ENCODE measurements at regions of chr13 and their contacts with region 1.

Region 1: GRCh38 chr13:35818633-35819067 is 312.5 kb downstream of the DCLK1 start:
- DNase-seq: peak; percentile 43
- H3K4me3 ChIP-seq: no peak overlapping the region
- H3K27ac ChIP-seq: no peak overlapping the region
- H3K4me1 ChIP-seq: no peaks in the 10 kb centered on the region
- H3K27me3 ChIP-seq: no peaks in the 10 kb centered on the region
- CTCF ChIP-seq: peak; percentile 38 to 50
- POLR2A ChIP-seq: no peak

Region 2: GRCh38 chr13:35164324-35164932 is 654.2 kb before region 1 on chr13:
- CTCF ChIA-PET with region 1: interaction called, 11 read pairs
- POLR2A ChIA-PET with region 1: no interaction called
- dilution Hi-C with region 1: no loop called
- intact Hi-C with region 1: no loop called
- DNase-seq: peak; percentile 59
- H3K4me3 ChIP-seq: no peak overlapping the region
- H3K27ac ChIP-seq: no peak overlapping the region
- H3K4me1 ChIP-seq: no peaks in the 10 kb centered on the region
- H3K27me3 ChIP-seq: no peaks in the 10 kb centered on the region
- CTCF ChIP-seq: peak; percentile 25 to 26
- POLR2A ChIP-seq: no peak

Region 3: DNA sequence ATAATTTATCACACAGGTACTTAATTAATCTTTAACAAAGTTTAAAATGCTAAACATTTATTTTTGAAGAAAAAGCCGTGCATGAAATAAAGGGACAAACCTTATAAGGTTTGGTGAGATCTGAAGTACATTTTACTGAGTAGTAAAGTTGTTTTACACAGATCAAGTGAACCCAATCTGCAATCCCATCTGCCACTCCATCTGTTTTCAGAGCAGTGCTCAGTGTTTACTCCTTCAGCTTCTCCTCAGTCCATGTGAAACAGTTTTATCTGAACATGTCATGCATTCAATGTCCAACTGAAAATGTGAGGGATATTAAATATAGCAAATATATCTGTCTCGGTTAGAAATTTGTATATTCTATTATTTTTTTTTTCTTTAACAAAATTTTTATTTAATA is 508.9 kb before region 1 on chr13:
- CTCF ChIA-PET with region 1: no interaction called
- POLR2A ChIA-PET with region 1: no interaction called
- dilution Hi-C with region 1: no loop called
- intact Hi-C with region 1: no loop called
- DNase-seq: no peak
- H3K4me3 ChIP-seq: no peak overlapping the region
- H3K27ac ChIP-seq: no peak overlapping the region
- H3K4me1 ChIP-seq: no peaks in the 10 kb centered on the region
- H3K27me3 ChIP-seq: no peaks in the 10 kb centered on the region
- CTCF ChIP-seq: no peak
- POLR2A ChIP-seq: no peak

Region 4: GRCh38 chr13:35789335-35790165 is 29.1 kb before region 1 on chr13:
- CTCF ChIA-PET with region 1: interaction called, 47 read pairs
- POLR2A ChIA-PET with region 1: no interaction called
- dilution Hi-C with region 1: no loop called
- intact Hi-C with region 1: no loop called
- DNase-seq: peak; percentile 48
- H3K4me3 ChIP-seq: no peak overlapping the region
- H3K27ac ChIP-seq: no peak overlapping the region
- H3K4me1 ChIP-seq: no peaks in the 10 kb centered on the region
- H3K27me3 ChIP-seq: no peaks in the 10 kb centered on the region
- CTCF ChIP-seq: peak; percentile 34 to 45
- POLR2A ChIP-seq: no peak

Region 5: GRCh38 chr13:35804901-35805300 is 13.7 kb before region 1 on chr13:
- CTCF ChIA-PET with region 1: interaction called, 29 read pairs
- POLR2A ChIA-PET with region 1: no interaction called
- dilution Hi-C with region 1: no loop called
- intact Hi-C with region 1: no loop called
- DNase-seq: no peak
- H3K4me3 ChIP-seq: no peak overlapping the region
- H3K27ac ChIP-seq: no peak overlapping the region
- H3K4me1 ChIP-seq: no peaks in the 10 kb centered on the region
- H3K27me3 ChIP-seq: peaks cover 2 to 5% of the 10 kb centered on the region in 2 experiments
- CTCF ChIP-seq: no peak
- POLR2A ChIP-seq: no peak

Region 6: GRCh38 chr13:35838356-35838755 is 19.7 kb after region 1 on chr13:
- CTCF ChIA-PET with region 1: interaction called, 22 read pairs
- POLR2A ChIA-PET with region 1: no interaction called
- dilution Hi-C with region 1: no loop called
- intact Hi-C with region 1: no loop called
- DNase-seq: peak; percentile 89
- H3K4me3 ChIP-seq: peak overlapping the region in 1 of 3 experiments; percentile 23
- H3K27ac ChIP-seq: peak overlapping the region; percentile 98
- H3K4me1 ChIP-seq: peaks cover 27% of the 10 kb centered on the region
- H3K27me3 ChIP-seq: no peaks in the 10 kb centered on the region
- CTCF ChIP-seq: no peak
- POLR2A ChIP-seq: peak; percentile 27

Region 7: DNA sequence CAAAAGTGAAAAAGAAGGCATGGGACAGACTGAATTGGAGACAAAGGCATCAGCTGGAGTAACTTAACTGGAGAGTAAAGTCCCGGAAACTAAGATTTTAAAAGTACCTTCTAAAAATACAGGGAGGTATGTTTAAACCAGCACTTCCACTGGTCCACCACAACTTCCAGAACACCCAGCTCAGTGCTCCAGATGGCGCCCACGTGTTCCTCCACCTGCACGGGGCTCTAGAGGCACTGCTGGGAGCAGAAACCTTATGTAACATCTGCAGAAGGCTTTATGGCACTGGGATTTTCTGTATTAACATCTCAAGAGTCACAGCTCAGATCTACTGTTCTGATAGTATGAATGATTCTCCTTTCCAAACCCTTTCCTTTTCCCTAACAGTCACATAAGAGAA is 60.5 kb after region 1 on chr13:
- CTCF ChIA-PET with region 1: no interaction called
- POLR2A ChIA-PET with region 1: no interaction called
- dilution Hi-C with region 1: no loop called
- intact Hi-C with region 1: no loop called
- DNase-seq: no peak
- H3K4me3 ChIP-seq: no peak overlapping the region
- H3K27ac ChIP-seq: no peak overlapping the region
- H3K4me1 ChIP-seq: no peaks in the 10 kb centered on the region
- H3K27me3 ChIP-seq: no peaks in the 10 kb centered on the region
- CTCF ChIP-seq: no peak
- POLR2A ChIP-seq: no peak

Region 8: DNA sequence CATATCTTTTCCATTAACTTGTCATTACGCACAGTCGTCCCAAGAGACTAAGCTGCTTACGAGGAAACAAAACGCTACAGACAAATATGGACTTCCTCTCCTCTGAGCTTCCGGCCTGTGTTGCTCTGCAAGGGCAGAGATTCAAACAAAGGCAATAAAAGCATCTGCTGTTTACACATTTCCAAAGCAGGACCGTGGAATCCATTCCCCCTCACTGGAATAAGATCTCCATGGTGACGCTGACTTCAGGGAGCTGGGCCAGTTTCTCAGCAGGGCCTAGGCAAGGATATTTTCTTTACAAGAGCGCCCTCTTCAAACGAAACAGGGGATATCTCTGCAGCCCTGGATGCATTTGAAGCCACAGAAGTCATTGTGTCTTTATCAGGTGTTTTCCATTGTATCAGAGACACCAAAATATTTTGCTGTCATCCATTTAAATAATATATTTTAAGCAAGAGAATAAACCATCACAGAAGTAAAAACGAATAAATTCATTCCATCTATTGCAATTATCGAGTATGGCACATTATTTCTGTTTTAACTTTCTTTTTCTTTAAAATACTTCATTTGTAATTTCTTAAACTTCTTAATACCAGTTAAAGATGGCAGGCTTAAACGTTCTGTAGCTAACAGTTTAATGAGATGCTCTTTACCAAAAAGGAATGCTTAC is 135.0 kb after region 1 on chr13:
- CTCF ChIA-PET with region 1: interaction called, 37 read pairs
- POLR2A ChIA-PET with region 1: no interaction called
- dilution Hi-C with region 1: no loop called
- intact Hi-C with region 1: loop called (anchors 1 kb)
- DNase-seq: peak; percentile 79
- H3K4me3 ChIP-seq: no peak overlapping the region
- H3K27ac ChIP-seq: no peak overlapping the region
- H3K4me1 ChIP-seq: no peaks in the 10 kb centered on the region
- H3K27me3 ChIP-seq: no peaks in the 10 kb centered on the region
- CTCF ChIP-seq: peak; percentile 54 to 57
- POLR2A ChIP-seq: no peak

Region 9: GRCh38 chr13:36074659-36075058 is 256.0 kb after region 1 on chr13:
- CTCF ChIA-PET with region 1: no interaction called
- POLR2A ChIA-PET with region 1: no interaction called
- dilution Hi-C with region 1: no loop called
- intact Hi-C with region 1: no loop called
- DNase-seq: no peak
- H3K4me3 ChIP-seq: no peak overlapping the region
- H3K27ac ChIP-seq: no peak overlapping the region
- H3K4me1 ChIP-seq: no peaks in the 10 kb centered on the region
- H3K27me3 ChIP-seq: no peaks in the 10 kb centered on the region
- CTCF ChIP-seq: no peak
- POLR2A ChIP-seq: no peak